OCI-LY7 (cell line): ENCODE measurements at regions of chr20 and their contacts with region 1.

Region 1: DNA sequence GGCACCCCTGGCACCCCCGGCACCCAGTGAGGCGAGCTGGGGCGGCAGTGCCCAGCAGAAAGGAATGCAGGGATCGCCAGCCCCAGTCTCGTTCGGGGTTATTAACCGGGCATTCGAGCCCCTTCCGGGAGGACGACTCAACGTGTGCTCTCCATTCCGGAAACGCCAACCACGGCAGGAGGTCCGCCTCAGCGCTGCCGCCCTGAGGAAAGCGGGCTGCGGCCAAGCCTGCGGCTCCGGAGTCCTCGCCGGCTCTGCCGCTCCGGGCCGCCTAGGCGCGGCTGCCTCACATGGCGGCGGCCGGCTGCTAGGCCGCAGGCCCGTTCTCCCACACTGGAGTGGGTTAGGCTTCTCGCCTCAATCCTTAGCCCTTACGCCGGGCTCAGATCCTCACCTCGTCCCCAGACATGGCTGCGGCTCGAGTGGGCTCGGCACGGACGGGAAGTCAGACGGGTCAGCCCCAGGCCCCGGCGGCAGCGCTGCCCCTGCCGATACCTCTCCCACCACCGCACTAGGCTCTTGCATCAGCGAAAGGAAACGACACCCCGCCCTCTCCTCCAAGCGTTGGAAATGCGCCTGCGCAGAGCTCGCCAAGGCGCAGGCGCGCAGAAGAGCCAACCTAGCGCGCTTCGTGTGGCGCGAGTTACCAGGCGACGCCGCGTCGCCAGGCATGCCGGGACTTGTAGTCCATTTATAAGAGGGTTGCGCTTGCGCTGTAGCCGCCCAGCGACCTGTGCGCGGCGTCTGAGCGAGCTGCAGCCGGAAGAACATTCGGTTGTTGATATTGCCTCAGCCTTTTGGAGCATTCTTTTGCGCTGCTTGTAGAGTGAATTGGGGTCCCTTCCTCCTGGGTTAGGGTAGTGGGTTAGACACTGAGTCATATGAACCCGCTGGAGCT is at the start of gene EIF2S2:
- DNase-seq: peak; percentile 100
- H3K4me3 ChIP-seq: peak within 1 kb of the TSS; percentile 98
- H3K27ac ChIP-seq: peak within 1 kb of the TSS; percentile 81
- H3K4me1 ChIP-seq: peaks cover 40% of the 10 kb centered on the region
- CTCF ChIP-seq: no peak
- total RNA-seq, gene EIF2S2: 104 and 112 TPM in 2 replicates

Region 2: DNA sequence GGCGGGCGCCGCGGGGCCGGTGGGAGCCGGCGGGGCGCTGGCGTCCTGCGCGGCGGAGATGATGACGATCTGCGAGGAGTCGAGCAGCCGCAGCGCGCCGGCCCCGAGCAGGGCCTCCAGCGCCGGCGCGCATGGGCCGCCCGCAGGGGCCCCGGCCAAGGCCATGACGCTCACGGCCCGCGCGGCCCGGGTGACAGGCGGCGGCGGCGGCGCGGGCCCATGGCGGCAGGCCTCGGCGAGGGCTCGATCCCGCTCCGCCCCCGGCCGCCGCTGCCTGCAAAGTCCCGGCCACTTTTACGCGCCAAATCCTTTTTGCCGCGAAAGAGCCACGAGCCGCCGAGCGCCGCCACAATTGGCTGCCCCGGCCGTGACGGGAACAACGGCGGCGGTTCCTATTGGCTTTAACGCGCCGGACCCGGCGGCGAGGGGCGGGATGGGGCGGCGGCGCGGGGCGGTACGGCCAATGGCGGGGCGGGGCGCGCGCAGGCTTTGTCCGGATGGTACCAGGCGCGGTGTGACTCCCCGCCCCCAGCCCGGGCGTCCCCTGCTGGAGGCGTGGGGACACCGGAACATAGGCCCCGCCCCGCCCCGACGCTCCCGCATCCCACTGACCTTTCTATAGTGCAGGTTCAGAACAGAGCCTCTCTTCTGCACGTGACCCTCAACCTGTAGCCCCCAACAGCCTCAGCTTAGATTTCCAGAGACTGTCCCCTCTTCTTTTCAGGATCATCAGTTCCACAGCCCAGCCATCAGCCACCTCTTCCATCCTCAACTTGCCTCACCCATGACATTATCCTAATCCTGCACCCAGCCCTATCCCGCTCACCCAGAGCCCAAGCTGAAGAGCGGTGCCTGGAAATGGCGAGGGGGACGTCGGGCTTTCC is 425.6 kb before region 1 on chr20 and contains the start of gene E2F1:
- CTCF ChIA-PET with region 1: no interaction called
- POLR2A ChIA-PET with region 1: no interaction called
- intact Hi-C with region 1: loop called (anchors 5 kb)
- DNase-seq: peak; percentile 97
- H3K4me3 ChIP-seq: peak within 1 kb of the TSS; percentile 90
- H3K27ac ChIP-seq: peak within 1 kb of the TSS; percentile 94
- H3K4me1 ChIP-seq: peaks cover 71% of the 10 kb centered on the region
- CTCF ChIP-seq: 0 out of 2 replicates have a peak, but pooled peaks have one; percentile 50
- total RNA-seq, gene E2F1: 128 and 135 TPM in 2 replicates

Region 3: DNA sequence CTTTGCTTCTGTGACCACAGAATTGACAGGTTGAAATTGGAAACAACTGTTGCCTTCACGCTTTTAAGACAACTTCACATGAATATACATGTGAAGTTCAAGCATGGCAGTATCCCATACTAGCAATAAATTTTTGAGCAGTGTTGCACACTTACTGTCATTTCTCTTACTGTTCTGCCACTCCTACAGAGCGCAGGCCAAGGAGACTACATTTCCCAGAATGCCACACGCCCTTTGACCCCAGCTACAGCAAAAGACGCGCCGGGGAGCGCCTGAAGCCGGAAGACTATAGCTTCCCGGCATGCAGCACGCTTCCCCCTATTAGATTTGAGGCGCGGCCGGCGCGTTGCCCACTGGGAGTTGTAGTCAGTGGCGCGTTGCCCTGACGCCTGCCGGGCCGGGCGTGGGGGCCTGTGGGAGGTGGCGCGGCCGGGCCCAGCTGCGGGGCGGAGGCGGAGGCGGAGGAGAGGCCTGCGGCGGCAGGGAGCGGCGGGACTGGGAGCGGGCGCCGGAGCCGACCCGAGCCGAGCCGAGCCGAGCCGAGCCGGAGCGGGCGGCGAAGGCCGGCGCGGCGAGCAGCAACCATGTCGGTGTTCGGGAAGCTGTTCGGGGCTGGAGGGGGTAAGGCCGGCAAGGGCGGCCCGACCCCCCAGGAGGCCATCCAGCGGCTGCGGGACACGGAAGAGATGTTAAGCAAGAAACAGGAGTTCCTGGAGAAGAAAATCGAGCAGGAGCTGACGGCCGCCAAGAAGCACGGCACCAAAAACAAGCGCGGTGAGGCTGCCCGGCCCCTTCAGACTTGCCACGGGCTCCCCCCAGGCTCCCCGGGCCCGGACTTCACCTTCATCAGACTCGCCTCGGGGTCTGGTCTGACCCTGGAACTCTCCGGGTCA is 300.8 kb before region 1 on chr20 and contains the start of gene CHMP4B:
- CTCF ChIA-PET with region 1: no interaction called
- POLR2A ChIA-PET with region 1: interaction called, 4 read pairs
- intact Hi-C with region 1: loop called (anchors 5 kb)
- DNase-seq: peak; percentile 98
- H3K4me3 ChIP-seq: peak within 1 kb of the TSS; percentile 92
- H3K27ac ChIP-seq: peak within 1 kb of the TSS; percentile 61
- H3K4me1 ChIP-seq: peaks cover 18% of the 10 kb centered on the region
- CTCF ChIP-seq: no peak
- total RNA-seq, gene CHMP4B: 32.4 and 46.6 TPM in 2 replicates

Region 4: GRCh38 chr20:33992923-33993575 is 118.9 kb before region 1 on chr20:
- CTCF ChIA-PET with region 1: no interaction called
- POLR2A ChIA-PET with region 1: interaction called, 4 read pairs
- intact Hi-C with region 1: loop called (anchors 2 kb)
- DNase-seq: peak; percentile 98
- H3K4me3 ChIP-seq: peak overlapping the region; percentile 99
- H3K27ac ChIP-seq: peak overlapping the region; percentile 78
- H3K4me1 ChIP-seq: peaks cover 42% of the 10 kb centered on the region
- CTCF ChIP-seq: no peak; the same call in 1 of the 2 replicates

Region 5: DNA sequence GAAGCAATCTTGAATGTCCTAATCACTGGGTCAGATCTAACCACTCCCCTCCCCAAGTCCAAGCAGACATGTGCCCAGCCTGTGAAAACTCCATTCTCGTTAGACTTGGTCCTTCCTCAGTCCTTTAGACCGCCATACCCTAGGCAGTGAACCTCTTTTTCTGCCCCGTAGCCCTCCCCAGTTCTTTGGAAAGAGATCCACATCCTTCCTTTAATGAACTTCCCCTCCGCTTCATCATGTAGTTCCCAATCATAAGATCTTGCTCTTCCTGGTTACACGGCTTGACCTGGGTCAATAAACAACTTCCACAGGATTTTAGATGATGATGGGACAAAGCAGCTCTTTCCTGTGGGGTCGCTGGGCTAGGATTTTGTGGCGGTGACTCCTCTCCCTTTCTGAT is 181.6 kb after region 1 on chr20:
- CTCF ChIA-PET with region 1: no interaction called
- POLR2A ChIA-PET with region 1: no interaction called
- intact Hi-C with region 1: no loop called
- DNase-seq: no peak
- H3K4me3 ChIP-seq: no peak overlapping the region
- H3K27ac ChIP-seq: no peak overlapping the region
- H3K4me1 ChIP-seq: no peaks in the 10 kb centered on the region
- CTCF ChIP-seq: no peak